ENCODE measurements at regions of chr1 and their contacts with region 1.

Region 1: DNA sequence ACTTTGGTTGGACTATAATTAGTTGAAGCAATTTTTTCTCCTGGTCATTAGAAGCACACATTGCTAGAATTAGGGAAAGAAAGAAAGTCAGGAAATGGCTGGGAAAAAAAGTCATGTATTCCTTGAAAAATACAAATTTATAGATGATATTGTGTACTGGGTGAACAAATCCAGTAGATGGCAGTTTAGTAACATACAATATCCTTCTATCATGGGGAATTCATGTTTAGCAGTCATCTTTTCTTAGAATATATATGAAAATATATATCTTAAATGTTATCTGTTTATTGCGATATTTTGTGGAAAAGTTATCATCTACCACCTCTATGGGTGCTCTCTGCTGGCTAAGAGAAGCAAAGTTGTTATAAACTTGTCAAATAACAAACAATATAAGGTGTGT is 13.1 kb upstream of the ZRANB2 start:
- DNase-seq: no peak
- H3K4me3 ChIP-seq: no peak overlapping the region
- CTCF ChIP-seq: peak; percentile 23

Region 2: GRCh38 chr1:71068325-71069240 is 25.4 kb before region 1 on chr1:
- CTCF ChIA-PET with region 1: no interaction called
- POLR2A ChIA-PET with region 1: no interaction called
- DNase-seq: no peak
- H3K4me3 ChIP-seq: no peak overlapping the region
- CTCF ChIP-seq: no peak

Region 3: DNA sequence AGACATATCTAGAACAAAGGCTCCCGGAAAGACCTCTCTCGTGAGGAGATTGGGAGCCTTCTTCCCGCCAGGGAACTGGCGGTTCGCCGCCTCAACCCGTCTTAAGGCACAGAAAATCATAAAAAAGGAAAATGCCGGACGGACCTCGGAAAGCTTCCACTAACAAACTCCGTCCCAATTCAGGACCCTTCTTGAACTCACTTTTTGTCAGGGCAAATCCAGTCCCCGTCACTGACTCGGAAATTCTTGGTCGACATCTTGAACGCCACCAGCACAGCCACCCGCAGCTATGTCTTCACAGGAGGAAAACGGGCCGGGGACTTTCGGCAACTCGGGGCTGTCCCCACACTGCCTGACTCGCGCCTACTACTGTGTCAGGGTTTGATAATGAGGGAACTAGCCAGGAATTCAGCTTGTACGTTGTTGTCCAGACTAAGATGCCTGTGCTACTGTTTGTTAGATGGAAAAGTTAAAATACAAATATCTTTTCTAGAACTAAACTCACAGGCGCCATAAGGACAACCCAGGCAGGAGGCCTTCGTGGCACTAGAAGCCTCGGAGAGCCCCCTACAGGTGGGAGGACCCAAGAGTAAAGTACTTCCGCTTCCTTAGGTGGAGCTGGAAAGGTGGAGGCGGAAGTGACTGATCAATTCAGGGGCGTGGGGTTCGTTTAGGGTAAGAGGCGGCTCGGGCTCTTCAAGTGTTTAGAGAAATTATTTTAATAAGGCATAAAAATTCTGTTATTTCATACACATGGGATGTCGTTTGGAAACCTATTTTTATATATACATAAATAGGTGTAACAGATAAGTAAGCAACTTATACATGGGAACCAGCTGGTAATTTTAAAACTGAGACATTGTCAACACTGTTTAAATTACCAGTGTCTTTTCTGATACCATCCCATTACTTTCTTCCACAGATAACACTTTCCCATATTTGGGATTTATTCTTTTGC is 12.9 kb before region 1 on chr1 and contains the start of gene ZRANB2:
- CTCF ChIA-PET with region 1: interaction called, 13 read pairs
- POLR2A ChIA-PET with region 1: interaction called, 3 read pairs
- DNase-seq: peak; percentile 68
- H3K4me3 ChIP-seq: peak within 1 kb of the TSS; percentile 81
- CTCF ChIP-seq: peak; percentile 75

Region 4: DNA sequence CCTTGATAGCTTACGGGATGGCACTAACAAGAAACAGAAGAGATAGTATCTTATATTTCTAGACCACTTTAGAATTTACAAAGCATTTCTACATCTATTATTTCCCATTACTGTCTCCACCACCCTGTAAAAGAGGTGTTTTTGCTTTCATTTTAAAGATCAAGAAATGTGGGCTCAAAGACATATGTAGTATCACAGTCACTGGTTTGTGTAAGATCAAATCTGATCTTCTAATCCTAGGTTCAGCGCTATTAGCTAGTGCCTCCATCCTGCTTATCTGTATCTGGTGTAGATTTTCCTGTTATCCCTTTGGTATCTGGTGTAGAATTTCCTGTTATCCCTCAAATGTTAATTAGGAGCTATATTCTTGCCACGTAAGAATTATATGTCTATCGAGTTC is 10.5 kb after region 1 on chr1:
- CTCF ChIA-PET with region 1: interaction called, 13 read pairs
- POLR2A ChIA-PET with region 1: no interaction called
- DNase-seq: no peak
- H3K4me3 ChIP-seq: no peak overlapping the region
- CTCF ChIP-seq: no peak

Region 5: GRCh38 chr1:71170925-71171324 is 77.0 kb after region 1 on chr1:
- CTCF ChIA-PET with region 1: no interaction called
- POLR2A ChIA-PET with region 1: no interaction called
- DNase-seq: no peak
- H3K4me3 ChIP-seq: no peak overlapping the region
- CTCF ChIP-seq: no peak

Region 6: DNA sequence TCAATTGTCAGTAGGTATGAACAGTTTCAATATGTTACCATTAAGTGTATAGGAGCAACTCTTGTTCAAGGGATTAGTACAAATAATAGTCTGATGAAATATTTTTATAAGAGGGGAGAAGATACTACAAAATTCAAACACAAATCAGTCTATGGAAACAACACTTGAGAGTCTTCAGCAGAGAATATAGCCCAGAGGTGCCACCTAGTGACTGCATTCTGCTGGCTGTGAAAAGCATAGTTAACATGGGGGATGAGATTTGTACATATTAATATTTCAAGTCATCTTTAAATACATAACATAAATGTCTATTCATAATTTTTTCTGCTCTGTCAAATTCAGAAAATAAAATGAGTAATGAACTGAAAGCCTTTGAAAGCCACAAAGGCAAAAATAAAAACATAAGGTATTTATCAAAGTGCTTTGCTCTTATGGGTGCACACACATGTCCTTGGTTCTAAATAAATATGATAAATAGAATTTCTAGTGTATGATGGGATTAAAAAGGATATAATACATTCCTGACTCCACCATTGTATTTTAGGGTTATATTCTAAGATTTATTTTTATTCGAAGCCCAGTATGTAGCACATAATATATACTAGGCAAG is 427.8 kb after region 1 on chr1:
- CTCF ChIA-PET with region 1: interaction called, 16 read pairs
- POLR2A ChIA-PET with region 1: no interaction called
- DNase-seq: peak; percentile 3
- H3K4me3 ChIP-seq: no peak overlapping the region
- CTCF ChIP-seq: peak; percentile 66

Measured in AG04449 (cell line).